Activated T-helper 1 cell treated with anti-CD3 and anti-CD28 coated beads, Interleukin-12 subunit alpha, Interleukin-12 subunit beta, Interleukin-2, Interleukin-4 antibody, amounts not matched to agents 30 ng/mL and 10 ng/mL and 1 ng/mL, durations not matched to agents 14 hours and 24 hours and 36 hours (primary cell): ENCODE measurements at regions of chr10 and their contacts with region 1.

Region 1: DNA sequence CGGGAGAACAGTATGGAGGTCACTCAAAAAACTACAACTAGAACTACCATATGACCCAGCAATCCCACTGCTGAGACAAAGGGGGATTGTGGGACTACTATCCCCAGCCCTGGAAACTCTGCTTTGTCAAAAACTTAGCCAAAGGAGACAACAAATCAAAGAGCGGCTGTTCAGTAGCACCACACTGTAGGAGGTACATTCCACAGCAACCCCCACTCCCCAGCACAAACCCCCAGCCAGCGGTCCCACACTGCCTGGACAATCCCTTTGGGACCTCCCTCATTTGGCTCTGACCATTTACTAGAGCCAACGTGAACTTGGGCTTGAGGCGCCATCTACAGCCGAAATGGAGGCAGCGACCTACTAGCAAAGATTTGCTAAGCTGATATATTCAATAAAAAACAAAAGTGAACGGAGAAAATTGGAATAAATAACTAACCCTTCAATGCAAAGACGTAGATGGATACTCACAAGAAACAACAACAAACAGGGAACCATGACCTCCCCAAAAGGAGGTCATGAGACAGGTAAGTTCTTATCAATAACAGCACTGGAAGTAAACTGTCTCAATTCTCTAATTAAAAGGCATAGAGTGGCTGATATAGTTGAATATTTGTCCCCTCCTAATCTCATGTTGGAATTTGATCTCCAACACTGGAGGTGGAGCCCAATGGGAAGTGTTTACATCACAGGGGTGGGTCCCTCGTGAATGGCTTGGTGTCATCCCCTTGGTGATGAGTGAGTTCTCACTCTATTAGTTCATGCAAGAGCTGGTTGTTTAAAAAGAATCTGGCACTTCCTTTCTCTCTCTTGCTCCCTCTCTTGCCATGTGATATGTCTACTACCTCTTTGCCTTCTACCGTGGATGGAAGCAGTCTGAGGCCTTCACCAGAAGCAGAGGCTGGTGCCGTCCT is 119.0 kb upstream of the KCNMA1 start:
- DNase-seq: no peak
- H3K4me3 Mint-ChIP-seq: no peak overlapping the region
- H3K27ac Mint-ChIP-seq: no peak overlapping the region
- H3K4me1 Mint-ChIP-seq: no peaks in the 10 kb centered on the region
- H3K27me3 Mint-ChIP-seq: peaks cover 27% of the 10 kb centered on the region

Region 2: DNA sequence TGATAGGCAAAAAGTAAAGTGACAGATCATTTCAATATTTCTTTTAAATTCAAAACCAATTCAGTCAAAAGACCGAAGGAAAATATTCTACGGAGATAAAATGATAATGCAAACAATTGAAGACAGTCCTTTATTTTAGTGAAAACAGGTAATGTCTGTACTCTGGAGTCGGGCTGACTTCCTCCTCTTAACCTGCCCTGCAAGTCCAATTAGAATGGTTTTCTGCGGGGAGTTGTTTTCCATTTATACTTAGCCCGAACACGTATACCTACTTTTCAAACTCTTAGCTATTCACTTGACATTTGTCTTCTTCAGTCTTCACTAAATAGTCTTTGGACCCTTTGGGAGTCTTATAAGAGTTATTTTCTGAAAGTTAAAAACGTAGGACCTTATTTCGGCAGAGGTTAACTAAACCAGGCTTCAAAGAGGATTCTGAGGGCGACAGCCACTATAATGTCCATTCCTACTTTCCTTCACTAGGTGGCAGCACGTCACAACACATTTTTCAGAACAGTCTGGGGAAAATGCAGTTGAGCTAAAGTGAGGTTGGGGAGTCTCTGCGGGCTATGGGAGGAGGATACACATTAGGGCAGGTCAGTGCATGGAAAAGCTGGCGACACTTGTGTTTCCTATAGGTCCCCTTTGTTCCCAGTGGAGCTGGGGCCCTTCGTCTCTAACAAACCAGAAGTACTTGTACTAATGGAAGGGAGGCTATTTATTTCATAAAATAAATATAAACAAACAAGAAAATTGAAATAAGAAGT is 590.9 kb before region 1 on chr10:
- intact Hi-C with region 1: loop called (anchors 1 kb)
- DNase-seq: peak; percentile 16
- H3K4me3 Mint-ChIP-seq: no peak overlapping the region
- H3K27ac Mint-ChIP-seq: no peak overlapping the region
- H3K4me1 Mint-ChIP-seq: no peaks in the 10 kb centered on the region
- H3K27me3 Mint-ChIP-seq: peaks cover 14% of the 10 kb centered on the region

Region 3: GRCh38 chr10:77350711-77351119 is 405.9 kb before region 1 on chr10:
- intact Hi-C with region 1: no loop called
- DNase-seq: no peak
- H3K4me3 Mint-ChIP-seq: no peak overlapping the region
- H3K27ac Mint-ChIP-seq: no peak overlapping the region
- H3K4me1 Mint-ChIP-seq: no peaks in the 10 kb centered on the region
- H3K27me3 Mint-ChIP-seq: no peaks in the 10 kb centered on the region

Region 4: DNA sequence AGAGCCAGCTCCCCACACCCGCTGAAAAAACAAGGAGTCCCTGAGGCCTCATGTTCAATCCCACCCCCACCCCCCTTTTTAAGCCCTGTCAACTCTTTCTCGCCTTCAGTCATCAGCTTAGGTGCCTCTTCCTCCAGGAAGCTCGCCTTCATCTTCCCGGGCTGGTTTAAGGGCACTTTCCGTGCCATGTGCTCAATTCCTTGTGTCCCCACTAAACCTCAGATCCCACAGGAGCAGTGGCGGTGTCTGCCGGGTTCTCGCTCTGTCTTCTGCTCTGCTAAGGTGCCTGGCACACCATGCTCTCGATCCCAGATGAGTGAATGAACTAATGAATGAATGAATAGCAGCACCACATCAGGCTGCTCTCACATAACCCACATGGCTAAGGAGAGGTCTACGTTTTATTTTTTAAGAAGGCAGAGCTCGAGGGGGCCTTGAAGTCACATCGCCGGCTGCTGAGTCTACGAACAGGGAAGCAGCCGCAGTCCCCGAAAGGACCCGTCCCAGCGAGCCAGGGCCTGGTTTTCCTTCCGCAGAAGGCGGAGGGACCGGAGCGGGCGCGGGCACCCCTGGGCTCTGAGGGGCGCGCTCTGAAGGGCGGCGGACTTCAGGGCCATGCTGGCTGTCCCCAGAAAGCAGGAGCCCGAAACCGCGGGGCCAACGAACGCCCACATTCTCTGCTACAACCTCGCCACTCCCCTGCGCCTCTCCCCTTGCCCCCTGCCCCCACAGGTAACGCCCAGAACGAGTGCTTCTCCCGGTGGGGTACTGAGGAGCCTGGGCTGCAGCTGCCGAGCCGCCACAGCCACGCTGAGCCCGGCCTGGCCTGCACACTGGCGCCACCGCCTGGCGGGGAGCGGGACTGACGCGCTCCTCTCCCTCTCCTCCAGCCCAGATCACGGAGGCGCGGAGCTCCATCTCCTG is 45.6 kb before region 1 on chr10:
- intact Hi-C with region 1: loop called (anchors 1 kb)
- DNase-seq: peak; percentile 59
- H3K4me3 Mint-ChIP-seq: peak overlapping the region; percentile 30
- H3K27ac Mint-ChIP-seq: no peak overlapping the region
- H3K4me1 Mint-ChIP-seq: peaks cover 5% of the 10 kb centered on the region
- H3K27me3 Mint-ChIP-seq: peaks cover 32% of the 10 kb centered on the region

Region 5: DNA sequence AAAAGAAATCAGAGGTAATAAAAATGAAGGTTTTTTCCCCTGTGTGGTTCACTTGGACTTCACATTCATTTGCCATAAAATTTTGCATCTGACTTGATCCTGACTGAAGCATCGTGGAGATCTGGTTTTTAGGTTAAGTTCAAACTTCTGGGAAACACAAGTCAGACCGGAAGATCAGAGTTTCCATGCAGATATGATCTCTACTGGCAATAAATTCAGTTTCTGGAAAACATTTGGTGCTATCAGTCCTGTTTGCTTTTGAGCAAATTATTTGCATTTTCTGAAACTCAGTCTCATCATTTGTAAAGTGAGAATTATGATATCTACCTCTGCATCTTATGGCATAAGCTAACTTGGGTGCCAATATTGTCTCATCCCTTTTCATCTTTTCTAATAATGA is 37.6 kb before region 1 on chr10:
- intact Hi-C with region 1: loop called (anchors 1 kb)
- DNase-seq: no peak
- H3K4me3 Mint-ChIP-seq: no peak overlapping the region
- H3K27ac Mint-ChIP-seq: no peak overlapping the region
- H3K4me1 Mint-ChIP-seq: peaks cover 7% of the 10 kb centered on the region
- H3K27me3 Mint-ChIP-seq: peaks cover 4% of the 10 kb centered on the region